Activated T-helper 2 cell treated with anti-CD3 and anti-CD28 coated beads, Interferon-gamma antibody, Interleukin-2, Interleukin-4, amounts not matched to agents 10 μg/mL and 5 μg/mL and 100 μg/mL, durations not matched to agents 14 hours and 24 hours and 36 hours (primary cell): ENCODE measurements at regions of chr2 and their contacts with region 1.

Region 1: DNA sequence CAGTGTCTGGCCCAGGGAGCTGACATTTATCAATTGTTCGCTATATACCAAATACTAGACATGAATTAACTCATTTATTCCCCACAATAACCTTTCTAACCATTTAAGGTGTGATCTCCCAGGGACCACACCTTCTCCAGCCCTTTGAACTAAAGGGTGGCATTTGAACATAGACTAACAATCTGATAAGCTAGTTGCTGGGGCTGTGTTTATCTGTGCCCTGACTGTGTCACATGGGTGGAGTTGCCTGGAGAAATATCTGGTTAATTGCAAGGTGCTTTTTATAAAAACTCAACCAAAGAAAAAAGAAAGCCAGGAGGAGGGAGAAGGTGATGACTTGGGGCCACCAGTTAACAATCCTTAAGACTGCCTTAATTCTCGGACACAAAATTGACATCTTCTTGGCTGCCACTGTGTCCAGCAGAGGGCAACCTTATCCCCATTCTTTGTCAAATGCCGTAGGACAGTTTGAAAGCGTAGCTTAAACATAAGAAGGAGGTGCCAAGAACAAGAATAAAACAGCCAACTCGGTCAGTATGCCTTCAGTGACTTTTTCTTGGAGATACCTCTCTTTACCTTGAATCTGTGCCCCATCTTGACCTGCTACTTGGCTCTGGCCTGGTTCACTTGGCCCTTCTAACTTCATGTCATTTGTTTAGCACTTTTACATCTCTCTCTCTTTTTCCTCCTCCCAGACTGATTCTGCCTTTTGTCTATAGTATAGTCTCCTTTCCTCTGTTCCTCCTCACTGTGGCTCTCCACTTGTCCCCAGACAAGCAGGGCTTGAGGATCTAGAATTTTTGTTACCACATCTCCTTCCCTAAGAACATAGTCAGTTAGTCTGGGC is 183.4 kb downstream of the MYO3B start:
- DNase-seq: peak; percentile 61
- H3K4me3 Mint-ChIP-seq: peak overlapping the region; percentile 77
- H3K27ac Mint-ChIP-seq: peak overlapping the region; percentile 100
- H3K4me1 Mint-ChIP-seq: peaks cover 60% of the 10 kb centered on the region
- H3K27me3 Mint-ChIP-seq: no peaks in the 10 kb centered on the region

Region 2: GRCh38 chr2:170313347-170313991 is 47.8 kb before region 1 on chr2:
- intact Hi-C with region 1: loop called (anchors 2 kb)
- DNase-seq: no peak
- H3K4me3 Mint-ChIP-seq: no peak overlapping the region
- H3K27ac Mint-ChIP-seq: no peak overlapping the region
- H3K4me1 Mint-ChIP-seq: peaks cover 10% of the 10 kb centered on the region
- H3K27me3 Mint-ChIP-seq: peaks cover 18% of the 10 kb centered on the region

Region 3: GRCh38 chr2:170324640-170325046 is 36.7 kb before region 1 on chr2:
- intact Hi-C with region 1: loop called (anchors 1 kb)
- DNase-seq: peak; percentile 38
- H3K4me3 Mint-ChIP-seq: no peak overlapping the region
- H3K27ac Mint-ChIP-seq: no peak overlapping the region
- H3K4me1 Mint-ChIP-seq: peaks cover 3% of the 10 kb centered on the region
- H3K27me3 Mint-ChIP-seq: no peaks in the 10 kb centered on the region

Region 4: DNA sequence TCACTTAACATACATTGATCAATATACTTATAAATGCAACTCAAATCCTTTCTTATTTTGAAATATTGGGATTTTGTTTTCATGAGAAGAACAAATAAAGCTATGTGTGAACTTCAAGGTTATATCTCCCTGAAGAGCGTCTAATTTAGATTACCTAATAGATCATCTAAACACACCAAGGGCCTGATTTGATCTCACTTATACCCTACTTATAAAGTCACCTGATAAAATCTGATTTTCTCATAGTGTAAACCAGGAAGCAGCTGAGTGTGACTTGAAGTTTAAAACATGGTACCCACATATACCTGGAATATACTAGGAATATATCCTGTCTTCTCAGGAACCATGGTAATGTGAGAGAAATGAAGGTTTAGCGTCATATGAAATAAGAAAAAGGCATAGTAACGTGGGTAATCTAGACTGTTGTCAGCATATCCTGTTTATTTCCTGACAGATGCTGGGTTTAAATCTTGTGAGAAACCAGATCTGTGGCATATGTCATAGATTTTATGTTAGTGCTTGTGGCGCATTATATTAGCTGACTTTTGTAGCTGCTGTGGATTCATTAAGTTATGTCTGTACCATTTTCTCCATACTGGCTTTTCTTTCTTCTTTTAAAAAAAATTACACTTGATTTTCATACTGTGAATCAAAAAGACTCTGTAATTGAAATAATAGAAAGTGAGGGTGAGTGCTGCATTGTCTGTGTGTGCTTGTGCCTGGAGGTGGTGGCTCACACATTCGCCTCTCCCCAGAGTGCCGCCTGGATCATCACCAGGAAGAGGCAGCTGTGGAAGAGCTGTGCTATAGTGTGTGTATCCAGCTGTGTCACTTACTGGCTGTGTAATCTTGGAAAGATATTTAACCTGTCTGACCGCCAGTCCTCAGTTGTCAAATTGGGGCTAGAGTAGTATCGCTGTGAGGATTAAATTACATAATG is 19.4 kb before region 1 on chr2:
- intact Hi-C with region 1: loop called (anchors 1 kb)
- DNase-seq: no peak
- H3K4me3 Mint-ChIP-seq: no peak overlapping the region
- H3K27ac Mint-ChIP-seq: peak overlapping the region; percentile 84
- H3K4me1 Mint-ChIP-seq: peaks cover 47% of the 10 kb centered on the region
- H3K27me3 Mint-ChIP-seq: no peaks in the 10 kb centered on the region

Region 5: DNA sequence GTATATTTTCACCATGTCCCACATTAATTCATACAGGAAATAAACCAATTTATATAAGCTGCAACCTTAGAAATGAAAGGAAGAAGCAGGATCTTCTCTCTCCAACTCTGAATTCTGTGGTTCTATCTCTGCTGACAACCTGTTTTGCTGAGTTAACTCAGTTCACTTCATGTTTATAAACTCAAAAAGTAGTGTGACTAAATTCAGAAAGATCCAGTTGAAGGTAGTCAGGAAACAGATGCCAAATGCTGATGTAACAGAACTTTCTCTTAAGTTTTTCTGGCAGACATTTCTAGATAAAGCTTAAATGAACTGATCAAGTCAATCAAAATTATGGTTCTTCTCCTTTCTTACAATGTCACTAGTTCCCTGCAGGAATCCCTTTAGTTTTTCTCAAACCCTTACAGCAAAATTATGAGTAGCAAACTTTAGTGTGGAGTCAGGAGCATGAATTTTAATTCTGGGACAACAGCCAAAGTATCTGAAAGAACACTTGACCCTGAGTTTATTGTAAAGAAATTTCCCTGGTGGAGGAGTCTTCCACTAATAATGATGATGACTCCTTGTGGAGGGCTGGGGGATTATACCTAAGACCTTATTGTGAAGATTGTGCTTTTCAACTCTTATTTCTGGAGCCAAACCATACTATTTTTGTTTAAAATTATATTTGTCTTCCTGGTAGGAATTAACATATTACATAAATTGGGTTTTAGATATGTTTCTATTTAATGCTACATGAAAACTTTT is 33.5 kb after region 1 on chr2:
- intact Hi-C with region 1: no loop called
- DNase-seq: no peak
- H3K4me3 Mint-ChIP-seq: no peak overlapping the region
- H3K27ac Mint-ChIP-seq: no peak overlapping the region
- H3K4me1 Mint-ChIP-seq: peaks cover 20% of the 10 kb centered on the region
- H3K27me3 Mint-ChIP-seq: peaks cover 6% of the 10 kb centered on the region

Region 6: GRCh38 chr2:170770606-170771420 is 409.5 kb after region 1 on chr2:
- intact Hi-C with region 1: loop called (anchors 2 kb)
- DNase-seq: peak; percentile 68
- H3K4me3 Mint-ChIP-seq: peak overlapping the region; percentile 94
- H3K27ac Mint-ChIP-seq: peak overlapping the region; percentile 85
- H3K4me1 Mint-ChIP-seq: peaks cover 10% of the 10 kb centered on the region
- H3K27me3 Mint-ChIP-seq: peaks cover 36% of the 10 kb centered on the region

Region 7: DNA sequence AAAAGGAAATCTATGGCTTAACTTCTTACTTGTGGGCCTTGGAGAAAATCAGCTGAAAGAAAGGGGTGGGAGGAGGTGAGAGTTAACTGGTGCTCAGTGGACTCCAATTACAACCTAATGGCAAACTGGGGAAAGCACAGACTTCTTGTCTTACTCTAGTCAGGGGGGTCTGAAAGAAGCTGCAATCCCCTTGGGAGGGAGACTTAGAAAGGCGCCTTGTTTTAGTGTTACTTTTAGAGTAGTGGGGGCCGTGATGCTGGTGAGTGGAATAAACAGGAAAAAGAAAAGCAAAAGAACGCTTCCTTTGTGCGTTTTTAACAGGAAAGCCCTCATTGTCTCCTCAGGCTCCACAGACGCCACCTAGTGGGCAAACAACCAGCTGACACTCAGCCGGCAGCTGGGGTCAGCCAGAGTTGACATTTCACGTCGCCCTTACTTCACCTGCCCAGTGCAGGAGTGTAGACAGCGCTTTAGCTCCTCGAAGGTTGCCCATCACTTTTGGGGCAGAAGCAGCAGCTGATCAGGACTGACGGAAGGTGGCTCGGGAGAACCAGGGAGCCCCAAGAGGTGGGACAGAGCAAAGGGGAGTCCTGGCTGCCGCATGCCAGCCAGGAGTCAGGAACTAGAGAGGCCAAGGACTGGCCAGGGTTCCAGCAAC is 511.9 kb after region 1 on chr2:
- intact Hi-C with region 1: loop called (anchors 5 kb)
- DNase-seq: peak; percentile 70
- H3K4me3 Mint-ChIP-seq: peak overlapping the region; percentile 64
- H3K27ac Mint-ChIP-seq: peak overlapping the region; percentile 82
- H3K4me1 Mint-ChIP-seq: peaks cover 13% of the 10 kb centered on the region
- H3K27me3 Mint-ChIP-seq: peaks cover 3% of the 10 kb centered on the region